Sigmoid colon (tissue), 7 donors: ENCODE measurements at regions of chr18 and their contacts with region 1.

Region 1: GRCh38 chr18:75551071-75551470 is 123.6 kb upstream of the SMIM21 start:
- DNase-seq: no peak
- H3K4me3 ChIP-seq: no peak overlapping the region
- H3K27ac ChIP-seq: no peak overlapping the region
- H3K4me1 ChIP-seq: no peaks in the 10 kb centered on the region
- H3K27me3 ChIP-seq: no peaks in the 10 kb centered on the region
- CTCF ChIP-seq: no peak
- EP300 ChIP-seq: no peak
- POLR2A ChIP-seq: no peak

Region 2: DNA sequence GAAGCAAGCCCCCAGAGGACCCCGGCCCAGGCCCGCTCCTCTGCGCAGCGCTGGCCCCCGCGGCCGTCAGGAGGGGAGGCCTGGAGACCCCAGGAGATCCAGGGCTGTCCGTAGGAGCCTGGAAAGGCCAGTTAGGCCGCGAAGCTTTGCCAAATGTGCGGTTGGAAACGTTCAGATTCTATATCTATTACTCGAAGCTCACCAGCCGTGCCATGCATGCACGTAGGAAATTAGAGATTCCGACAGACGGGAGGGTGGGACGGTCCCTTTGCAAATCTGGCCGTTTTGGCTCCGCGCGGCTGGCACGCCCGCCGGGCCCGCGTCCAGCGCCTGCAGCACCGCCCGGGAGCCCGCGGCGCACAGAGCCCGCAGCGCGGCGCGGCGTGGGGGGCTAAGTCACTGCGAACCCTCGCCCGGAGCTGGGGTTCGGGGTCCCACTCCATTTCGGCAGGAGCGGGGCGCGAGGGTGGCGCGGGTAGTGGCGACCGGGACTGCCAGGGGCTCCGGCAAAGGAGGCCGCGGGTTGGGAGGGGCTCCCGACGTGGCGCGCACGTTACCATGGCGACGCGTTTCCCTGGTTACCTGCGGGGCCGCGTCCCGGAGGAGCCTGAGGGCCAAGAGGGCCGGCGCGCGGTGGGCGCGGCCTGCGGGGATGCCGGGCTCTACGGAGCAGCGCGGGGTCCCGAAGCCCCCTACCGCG is 365.0 kb after region 1 on chr18:
- intact Hi-C with region 1: loop called (anchors 10 kb)
- DNase-seq: no peak
- H3K4me3 ChIP-seq: peak overlapping the region; percentile 43 to 65 (median 56)
- H3K27ac ChIP-seq: peak overlapping the region in 3 of 4 donors; percentile 34 to 62 (median 51)
- H3K4me1 ChIP-seq: peaks cover 0 to 11% (median 9%) of the 10 kb centered on the region in 4 donors
- H3K27me3 ChIP-seq: no peaks in the 10 kb centered on the region
- CTCF ChIP-seq: no peak
- EP300 ChIP-seq: no peak
- POLR2A ChIP-seq: no peak